ENCODE measurements at regions of chr6 and their contacts with region 1.

Region 1: GRCh38 chr6:30814136-30815040 is 69.9 kb upstream of the DDR1 start:
- DNase-seq: peak; percentile 72

Region 2: DNA sequence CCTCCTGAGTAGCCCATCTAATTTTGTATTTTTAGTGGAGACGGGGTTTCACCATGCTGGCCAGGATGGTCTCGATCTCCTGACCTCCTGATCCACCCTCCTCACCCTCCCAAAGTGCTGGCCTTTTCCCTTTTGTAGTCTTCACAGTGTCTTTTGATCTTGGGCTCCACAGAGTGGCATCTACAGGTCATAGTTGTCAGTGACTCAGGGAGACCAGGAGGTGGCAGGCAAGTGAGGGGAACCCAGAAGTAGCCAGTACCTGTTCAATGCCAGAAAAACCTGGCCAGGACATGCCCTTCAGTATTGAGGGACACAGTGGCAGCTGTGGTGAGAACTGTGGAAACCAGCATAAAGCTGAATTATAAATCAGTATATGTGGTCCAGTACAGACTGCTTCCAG is 449.8 kb before region 1 on chr6:
- intact Hi-C with region 1: no loop called
- DNase-seq: no peak

Region 3: GRCh38 chr6:30769088-30769852 is 45.1 kb before region 1 on chr6:
- intact Hi-C with region 1: loop called in 1 of 2 experiments (anchors 10 kb)
- DNase-seq: peak; percentile 85

Region 4: GRCh38 chr6:30862156-30862875 is 47.9 kb after region 1 on chr6:
- intact Hi-C with region 1: no loop called
- DNase-seq: no peak

Measured in posterior vena cava (tissue), 2 donors.